ENCODE measurements at regions of chr20 and their contacts with region 1.

Region 1: DNA sequence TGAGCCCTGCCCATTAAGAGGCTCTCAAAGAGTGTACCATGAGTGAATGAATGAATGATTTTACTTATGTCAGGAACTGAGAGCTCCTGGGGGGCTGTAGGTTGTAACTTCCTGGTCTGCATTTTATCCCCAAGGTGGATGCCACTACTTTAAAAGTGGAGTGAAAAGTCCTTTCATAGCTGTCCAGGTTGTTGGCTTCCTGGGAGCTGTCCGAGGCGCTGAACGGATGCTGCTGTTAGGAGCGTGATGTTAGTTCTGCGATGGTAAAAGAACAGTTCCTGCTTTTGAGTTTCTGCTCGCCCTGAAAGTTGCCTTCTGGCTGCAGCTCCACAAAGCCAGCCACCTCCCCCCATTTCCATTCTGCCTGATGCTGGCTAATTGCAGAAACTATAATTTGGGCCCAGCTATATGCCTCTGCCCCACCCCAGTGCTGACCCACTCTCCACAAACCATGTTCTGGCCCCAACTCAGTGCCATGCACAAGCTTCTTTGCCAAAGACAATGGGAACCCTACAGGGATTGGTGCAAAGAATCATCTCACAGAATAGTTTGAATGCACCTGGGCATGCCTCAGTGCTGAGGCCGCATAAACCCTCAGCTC is 330.9 kb upstream of the CDH4 start:
- DNase-seq: peak; percentile 18
- H3K4me3 ChIP-seq: no peak overlapping the region
- H3K27ac ChIP-seq: no peak overlapping the region
- H3K4me1 ChIP-seq: no peaks in the 10 kb centered on the region
- H3K27me3 ChIP-seq: no peaks in the 10 kb centered on the region
- CTCF ChIP-seq: no peak

Region 2: GRCh38 chr20:60812561-60812960 is 108.6 kb before region 1 on chr20:
- CTCF ChIA-PET with region 1: no interaction called
- dilution Hi-C with region 1: loop called (anchors 5 kb)
- in situ Hi-C with region 1: no loop called
- intact Hi-C with region 1: no loop called
- DNase-seq: no peak
- H3K4me3 ChIP-seq: no peak overlapping the region
- H3K27ac ChIP-seq: no peak overlapping the region
- H3K4me1 ChIP-seq: no peaks in the 10 kb centered on the region
- H3K27me3 ChIP-seq: peaks cover 2% of the 10 kb centered on the region
- CTCF ChIP-seq: no peak

Measured in mammary epithelial cell (primary cell).